CD8-positive, alpha-beta T cell (primary cell): ENCODE measurements at regions of chr4 and their contacts with region 1.

Region 1: GRCh38 chr4:108650212-108651013 is at the start of gene OSTC:
- DNase-seq: peak; percentile 81 to 96 (median 93)
- ATAC-seq: peak; percentile 89
- H3K4me3 ChIP-seq: peak within 1 kb of the TSS; percentile 83 to 98
- H3K4me3 Mint-ChIP-seq: peak within 1 kb of the TSS; percentile 93
- H3K27ac ChIP-seq: peak within 1 kb of the TSS; percentile 93 to 94
- H3K27ac Mint-ChIP-seq: peak within 1 kb of the TSS; percentile 98
- H3K4me1 ChIP-seq: peaks cover 23% of the 10 kb centered on the region
- H3K4me1 Mint-ChIP-seq: peaks cover 40% of the 10 kb centered on the region
- H3K27me3 ChIP-seq: no peaks in the 10 kb centered on the region
- H3K27me3 Mint-ChIP-seq: no peaks in the 10 kb centered on the region
- CTCF ChIP-seq: no peak
- total RNA-seq, gene OSTC: 25.6 to 28.1 TPM

Region 2: DNA sequence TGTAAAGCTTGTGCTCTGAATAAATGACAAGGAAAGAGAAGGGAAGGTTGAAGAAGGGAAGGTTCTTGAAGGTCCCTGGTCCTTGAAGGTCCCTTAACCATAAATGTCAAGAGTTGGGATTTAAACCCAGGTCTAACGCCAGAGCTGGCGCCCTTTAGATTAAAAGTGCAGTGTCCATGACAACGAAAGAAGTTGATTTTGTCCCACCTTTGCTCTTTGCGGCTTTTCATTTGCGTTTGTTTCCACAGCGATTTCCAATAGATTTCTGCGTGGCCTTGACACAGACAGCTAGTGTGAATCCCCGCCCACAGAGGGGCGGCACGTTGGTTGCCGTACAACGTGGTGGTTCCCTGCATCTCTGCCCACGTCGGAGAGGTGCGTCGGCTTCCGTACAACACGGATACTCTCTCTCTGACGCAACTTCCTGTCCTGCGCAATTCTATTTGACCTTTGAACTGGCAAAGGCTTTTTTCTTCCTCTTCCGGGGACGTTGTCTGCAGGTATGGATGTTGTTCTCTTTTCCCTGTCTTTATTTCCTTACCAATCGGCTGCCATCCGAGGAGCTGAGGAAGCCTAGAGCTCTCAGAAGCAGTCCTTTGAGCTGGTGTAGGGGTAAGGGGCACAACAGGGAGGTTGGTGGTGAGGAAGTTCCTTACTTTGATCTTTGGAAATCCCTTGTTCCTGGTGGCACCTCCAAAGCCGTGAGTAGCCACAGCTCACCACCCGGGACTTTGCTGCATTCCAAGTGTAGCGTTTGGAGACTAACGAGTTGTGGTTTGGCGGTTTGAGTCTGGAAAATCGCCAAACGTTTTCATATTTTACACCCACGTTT is 30.1 kb before region 1 on chr4 and contains the start of gene RPL34:
- CTCF ChIA-PET with region 1: interaction called, 6 read pairs
- POLR2A ChIA-PET with region 1: interaction called, 9 read pairs
- intact Hi-C with region 1: loop called (anchors 1 kb)
- DNase-seq: peak; percentile 94 to 100 (median 97)
- ATAC-seq: peak; percentile 98
- H3K4me3 ChIP-seq: peak within 1 kb of the TSS; percentile 92 to 97
- H3K4me3 Mint-ChIP-seq: peak within 1 kb of the TSS; percentile 93
- H3K27ac ChIP-seq: peak within 1 kb of the TSS; percentile 85 to 90
- H3K27ac Mint-ChIP-seq: peak within 1 kb of the TSS; percentile 96
- H3K4me1 ChIP-seq: peaks cover 50% of the 10 kb centered on the region
- H3K4me1 Mint-ChIP-seq: peaks cover 58% of the 10 kb centered on the region
- H3K27me3 ChIP-seq: no peaks in the 10 kb centered on the region
- H3K27me3 Mint-ChIP-seq: no peaks in the 10 kb centered on the region
- CTCF ChIP-seq: no peak
- total RNA-seq, gene RPL34: 3,253 to 3,442 TPM

Region 3: GRCh38 chr4:108725457-108725856 is 75.0 kb after region 1 on chr4:
- CTCF ChIA-PET with region 1: no interaction called
- POLR2A ChIA-PET with region 1: no interaction called
- intact Hi-C with region 1: no loop called
- DNase-seq: no peak
- ATAC-seq: no peak
- H3K4me3 ChIP-seq: no peak overlapping the region
- H3K4me3 Mint-ChIP-seq: no peak overlapping the region
- H3K27ac ChIP-seq: no peak overlapping the region
- H3K27ac Mint-ChIP-seq: no peak overlapping the region
- H3K4me1 ChIP-seq: no peaks in the 10 kb centered on the region
- H3K4me1 Mint-ChIP-seq: no peaks in the 10 kb centered on the region
- H3K27me3 ChIP-seq: no peaks in the 10 kb centered on the region
- H3K27me3 Mint-ChIP-seq: no peaks in the 10 kb centered on the region
- CTCF ChIP-seq: no peak